AG04449 (cell line): ENCODE measurements at regions of chr17 and their contacts with region 1.

Region 1: DNA sequence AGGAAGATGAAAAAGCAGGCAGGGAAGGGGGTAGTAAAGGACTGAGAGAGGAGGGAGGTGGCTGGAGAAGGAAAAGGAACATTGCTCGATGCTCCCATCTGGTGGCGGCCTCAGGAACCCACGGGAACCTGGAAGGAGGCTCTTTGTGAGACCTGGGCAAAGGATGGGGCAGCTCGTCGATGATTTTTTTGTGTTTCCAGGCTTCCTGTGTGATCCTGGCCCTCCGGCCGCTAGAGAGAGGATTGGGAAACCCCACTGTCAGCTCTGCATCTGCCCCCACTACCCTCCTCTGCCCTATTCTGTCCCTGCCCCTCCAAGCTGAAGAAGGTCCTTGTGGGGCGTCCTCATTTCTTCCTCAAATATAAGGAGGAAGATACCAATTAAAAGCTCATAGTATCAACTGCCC is 6.6 kb downstream of the WFIKKN2 start:
- DNase-seq: no peak
- H3K4me3 ChIP-seq: no peak overlapping the region
- CTCF ChIP-seq: peak; percentile 91

Region 2: GRCh38 chr17:50697663-50698274 is 144.2 kb before region 1 on chr17:
- CTCF ChIA-PET with region 1: interaction called, 11 read pairs
- POLR2A ChIA-PET with region 1: no interaction called
- DNase-seq: no peak
- H3K4me3 ChIP-seq: no peak overlapping the region
- CTCF ChIP-seq: no peak

Region 3: DNA sequence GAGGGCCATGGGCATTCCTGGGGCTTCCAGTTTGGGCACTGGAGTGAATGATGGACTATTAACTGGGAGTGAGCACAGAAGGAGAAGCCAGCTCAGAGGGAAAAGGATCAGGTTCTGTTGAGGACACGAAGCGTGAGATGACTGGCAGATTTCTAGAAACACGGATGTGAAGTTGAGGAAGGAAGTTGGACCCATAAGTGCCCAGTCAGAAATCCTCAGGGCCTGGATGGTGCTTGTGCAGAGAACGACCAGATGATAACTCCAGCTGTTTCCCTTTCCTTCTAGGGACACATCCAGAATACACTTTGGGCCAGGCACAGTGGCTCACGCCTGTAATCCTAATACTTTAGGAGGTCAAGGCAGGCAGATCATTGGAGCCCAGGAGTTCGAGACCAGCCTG is 51.3 kb before region 1 on chr17:
- CTCF ChIA-PET with region 1: interaction called, 516 read pairs
- POLR2A ChIA-PET with region 1: no interaction called
- DNase-seq: no peak
- H3K4me3 ChIP-seq: no peak overlapping the region
- CTCF ChIP-seq: no peak

Region 4: DNA sequence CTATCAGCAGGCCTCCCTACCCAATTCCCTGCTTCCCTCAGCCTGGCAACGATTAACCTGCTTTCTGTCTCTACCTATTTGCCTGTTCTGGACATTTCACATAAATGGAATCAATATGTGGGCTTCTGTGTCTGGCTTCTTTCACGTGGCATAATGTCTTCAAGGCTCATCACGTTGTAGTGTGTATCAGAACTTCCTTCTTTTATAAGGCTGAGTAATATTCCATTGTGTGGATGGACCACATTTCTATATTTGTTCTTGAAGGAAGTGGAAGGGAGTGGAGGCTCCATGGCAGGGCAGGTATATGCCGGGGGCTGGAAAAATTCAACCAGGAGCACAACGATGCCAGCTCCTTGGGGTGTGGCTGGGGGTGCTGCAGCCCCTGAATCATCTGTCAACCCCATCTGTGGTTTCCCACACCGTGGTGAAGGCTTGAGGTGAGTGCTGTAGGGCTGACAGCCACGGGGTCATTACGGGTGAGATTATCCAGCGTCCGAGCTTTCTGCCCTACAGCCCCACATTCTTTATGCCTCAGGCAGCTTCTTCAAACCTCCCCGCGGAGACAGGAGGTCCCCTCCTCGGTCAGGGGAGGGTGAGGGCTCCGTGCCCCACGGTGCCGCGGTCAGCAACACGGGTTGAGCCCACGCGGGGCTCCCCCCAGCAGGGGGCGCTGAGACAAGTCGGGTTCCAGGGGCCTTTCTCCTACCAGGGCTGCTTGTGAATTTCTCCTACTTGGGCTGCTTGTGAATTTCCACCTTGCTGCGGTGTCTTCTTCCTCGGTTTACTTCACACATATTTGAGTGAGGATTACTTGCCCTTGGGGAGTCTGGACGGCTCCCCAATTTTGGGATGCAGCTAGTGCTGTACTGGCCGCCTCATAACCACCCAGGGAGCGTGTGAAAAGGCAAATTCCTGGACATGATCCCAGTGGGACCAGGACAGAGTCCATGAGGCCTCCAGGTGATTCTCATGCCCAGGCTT is 24.9 kb before region 1 on chr17:
- CTCF ChIA-PET with region 1: interaction called, 69 read pairs
- POLR2A ChIA-PET with region 1: no interaction called
- DNase-seq: no peak
- H3K4me3 ChIP-seq: no peak overlapping the region
- CTCF ChIP-seq: peak; percentile 67

Region 5: DNA sequence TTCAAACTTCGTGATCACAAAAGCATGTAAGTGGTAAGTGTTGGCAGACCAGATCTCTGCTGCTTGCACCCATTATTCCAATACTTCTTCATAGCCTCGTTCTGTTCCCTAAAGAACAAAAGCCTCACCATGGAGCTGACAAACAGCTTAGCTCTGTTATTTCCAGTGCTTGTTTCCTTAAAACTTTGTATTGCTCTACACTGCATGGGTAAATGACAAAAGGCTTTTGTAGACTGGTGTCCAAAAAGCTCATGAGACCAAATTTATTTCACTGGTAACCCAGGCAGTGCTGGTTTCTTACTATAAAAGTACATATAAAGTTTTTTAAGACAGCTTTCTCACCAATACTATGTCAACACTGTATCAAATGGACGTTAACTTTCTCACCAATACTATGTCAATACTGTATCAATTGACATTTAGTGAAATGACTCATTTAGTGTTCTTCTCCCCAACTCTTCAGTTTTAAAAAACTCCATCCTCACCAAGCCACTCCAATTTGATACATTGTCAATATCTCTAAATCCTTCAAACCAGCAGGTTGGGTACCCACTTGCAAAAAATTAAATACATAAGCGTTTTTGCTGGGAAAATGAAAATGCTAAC is 19.2 kb after region 1 on chr17:
- CTCF ChIA-PET with region 1: interaction called, 162 read pairs
- POLR2A ChIA-PET with region 1: interaction called, 9 read pairs
- DNase-seq: no peak
- H3K4me3 ChIP-seq: no peak overlapping the region
- CTCF ChIP-seq: no peak

Region 6: GRCh38 chr17:50904521-50905459 is 62.8 kb after region 1 on chr17:
- CTCF ChIA-PET with region 1: no interaction called
- POLR2A ChIA-PET with region 1: no interaction called
- DNase-seq: no peak
- H3K4me3 ChIP-seq: no peak overlapping the region
- CTCF ChIP-seq: no peak